Keratinocyte (primary cell): ENCODE measurements at regions of chr5 and their contacts with region 1.

Region 1: DNA sequence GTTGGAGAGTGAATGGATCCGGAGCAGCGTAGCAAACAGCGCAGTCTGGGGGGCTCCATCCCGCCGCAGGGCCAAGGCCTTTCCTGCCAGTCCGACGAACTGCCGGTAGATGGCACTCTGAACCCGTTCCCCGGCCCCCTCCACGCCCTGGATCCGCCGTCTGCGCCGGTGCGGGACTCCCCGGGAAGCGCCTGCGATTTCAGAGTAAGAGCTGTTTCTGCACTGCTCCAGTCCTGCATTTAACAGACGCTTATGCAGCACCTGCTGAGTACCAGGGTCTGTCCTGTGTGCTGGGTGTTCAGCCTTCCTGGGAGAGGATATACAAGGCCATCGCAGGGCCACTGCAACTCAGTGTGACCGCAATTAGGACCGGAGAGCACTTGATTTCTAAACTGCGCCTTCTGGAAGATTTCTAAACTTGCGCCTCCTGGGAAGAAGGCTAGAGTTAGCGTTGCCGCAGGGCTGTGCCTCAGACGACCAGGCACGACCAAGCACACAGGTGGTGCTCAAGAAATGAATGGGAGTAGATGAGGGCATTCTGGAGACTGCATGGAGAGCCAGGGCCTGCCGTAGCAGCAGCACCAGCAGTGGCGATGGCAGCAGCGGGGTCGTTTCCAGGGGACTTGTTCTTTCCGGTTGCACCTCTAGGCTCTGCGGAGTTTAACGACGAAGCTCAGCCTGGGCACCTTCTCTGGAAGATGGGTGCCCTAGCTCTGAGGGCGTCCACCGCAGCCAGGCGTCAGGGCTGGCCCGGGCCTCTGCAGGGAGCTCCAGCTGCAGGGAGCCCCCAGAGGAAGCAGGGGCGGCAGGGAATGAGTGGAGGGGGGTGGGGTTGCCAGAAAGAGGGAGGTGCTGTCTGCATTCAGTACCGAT is 14.3 kb upstream of the TIFAB start:
- DNase-seq: no peak
- H3K4me3 ChIP-seq: no peak overlapping the region
- H3K27ac ChIP-seq: no peak overlapping the region
- H3K4me1 ChIP-seq: no peaks in the 10 kb centered on the region
- H3K27me3 ChIP-seq: peaks cover 13% of the 10 kb centered on the region
- CTCF ChIP-seq: peak; percentile 80 to 97 (median 96)

Region 2: DNA sequence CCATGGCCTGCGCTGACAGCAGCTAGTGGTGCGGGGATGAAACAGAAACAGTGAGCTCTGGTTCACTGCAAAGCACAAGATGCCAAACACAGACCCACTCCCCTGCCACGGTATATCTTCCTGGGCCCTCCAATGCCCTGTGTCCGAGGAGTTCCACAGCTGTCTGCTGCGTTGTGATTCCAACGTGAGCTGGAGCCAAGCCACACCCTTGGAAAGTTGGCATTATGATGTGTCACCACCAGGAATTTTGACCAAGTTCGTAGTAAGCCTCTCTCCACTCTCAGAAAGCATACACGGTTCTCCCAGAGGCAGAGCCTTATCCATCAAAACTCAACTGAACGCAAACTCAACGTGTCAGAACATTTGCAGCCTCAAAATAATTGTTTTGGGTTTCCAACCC is 123.0 kb before region 1 on chr5:
- dilution Hi-C with region 1: no loop called
- DNase-seq: no peak
- H3K4me3 ChIP-seq: no peak overlapping the region
- H3K27ac ChIP-seq: no peak overlapping the region
- H3K4me1 ChIP-seq: peaks cover 5% of the 10 kb centered on the region
- H3K27me3 ChIP-seq: no peaks in the 10 kb centered on the region
- CTCF ChIP-seq: no peak

Region 3: GRCh38 chr5:135551593-135552447 is 85.4 kb after region 1 on chr5:
- dilution Hi-C with region 1: loop called (anchors 5 kb)
- DNase-seq: no peak
- H3K4me3 ChIP-seq: no peak overlapping the region
- H3K27ac ChIP-seq: no peak overlapping the region
- H3K4me1 ChIP-seq: peaks cover 4% of the 10 kb centered on the region
- H3K27me3 ChIP-seq: peaks cover 24% of the 10 kb centered on the region
- CTCF ChIP-seq: peak; percentile 85 to 95 (median 93)

Region 4: DNA sequence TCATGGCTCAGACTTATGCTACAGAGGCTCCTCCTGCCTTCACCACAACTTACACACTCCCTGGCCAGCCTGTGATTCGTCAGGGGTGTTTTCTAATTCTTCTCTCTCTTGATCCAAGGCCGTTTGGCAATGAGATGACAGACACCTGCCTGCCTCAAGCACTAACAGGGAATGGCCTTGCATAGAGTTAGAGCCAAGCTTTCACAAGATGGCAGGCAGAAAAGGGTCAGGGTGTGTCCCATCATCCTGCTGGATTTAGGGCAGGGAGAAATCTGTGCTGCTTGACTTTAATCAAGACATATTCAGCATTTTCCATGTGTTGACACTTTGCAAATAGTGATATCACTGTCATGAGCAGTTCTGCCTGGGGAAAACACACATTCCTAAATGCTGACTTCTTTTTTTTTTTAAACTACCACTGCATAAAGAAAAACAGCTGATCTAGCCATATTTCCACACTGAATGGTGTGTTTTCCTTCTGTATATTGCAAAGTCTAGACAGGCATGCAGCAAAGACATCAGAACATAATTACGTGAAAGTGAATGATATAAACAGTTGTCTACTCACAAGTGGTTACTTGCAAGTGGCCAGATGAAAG is 273.1 kb after region 1 on chr5:
- dilution Hi-C with region 1: loop called (anchors 10 kb)
- DNase-seq: no peak
- H3K4me3 ChIP-seq: no peak overlapping the region
- H3K27ac ChIP-seq: no peak overlapping the region
- H3K4me1 ChIP-seq: no peaks in the 10 kb centered on the region
- H3K27me3 ChIP-seq: peaks cover 4% of the 10 kb centered on the region
- CTCF ChIP-seq: no peak

Region 5: GRCh38 chr5:135829681-135830383 is 363.4 kb after region 1 on chr5:
- dilution Hi-C with region 1: loop called (anchors 25 kb)
- DNase-seq: no peak
- H3K4me3 ChIP-seq: no peak overlapping the region
- H3K27ac ChIP-seq: no peak overlapping the region
- H3K4me1 ChIP-seq: peaks cover 3% of the 10 kb centered on the region
- H3K27me3 ChIP-seq: peaks cover 24% of the 10 kb centered on the region
- CTCF ChIP-seq: peak in 2 of 3 experiments; percentile 85 to 90